Activated T-helper 2 cell treated with anti-CD3 and anti-CD28 coated beads, Interferon-gamma antibody, Interleukin-2, Interleukin-4, amounts not matched to agents 10 μg/mL and 5 μg/mL and 100 μg/mL, durations not matched to agents 14 hours and 24 hours and 36 hours (primary cell): ENCODE measurements at regions of chr6 and their contacts with region 1.

Region 1: GRCh38 chr6:90285611-90286381 is 10.8 kb downstream of the BACH2 start:
- DNase-seq: peak; percentile 51
- H3K4me3 Mint-ChIP-seq: peak overlapping the region; percentile 71
- H3K27ac Mint-ChIP-seq: peak overlapping the region; percentile 90
- H3K4me1 Mint-ChIP-seq: peaks cover 83% of the 10 kb centered on the region
- H3K27me3 Mint-ChIP-seq: no peaks in the 10 kb centered on the region

Region 2: GRCh38 chr6:89952686-89953085 is 333.1 kb before region 1 on chr6:
- intact Hi-C with region 1: loop called (anchors 1 kb)
- DNase-seq: peak; percentile 53
- H3K4me3 Mint-ChIP-seq: peak overlapping the region; percentile 49
- H3K27ac Mint-ChIP-seq: peak overlapping the region; percentile 76
- H3K4me1 Mint-ChIP-seq: peaks cover 67% of the 10 kb centered on the region
- H3K27me3 Mint-ChIP-seq: no peaks in the 10 kb centered on the region

Region 3: GRCh38 chr6:90219209-90219985 is 66.4 kb before region 1 on chr6:
- intact Hi-C with region 1: loop called (anchors 2 kb)
- DNase-seq: no peak
- H3K4me3 Mint-ChIP-seq: no peak overlapping the region
- H3K27ac Mint-ChIP-seq: no peak overlapping the region
- H3K4me1 Mint-ChIP-seq: peaks cover 25% of the 10 kb centered on the region
- H3K27me3 Mint-ChIP-seq: no peaks in the 10 kb centered on the region

Region 4: GRCh38 chr6:90268178-90268577 is 17.6 kb before region 1 on chr6:
- intact Hi-C with region 1: loop called (anchors 2 kb)
- DNase-seq: no peak
- H3K4me3 Mint-ChIP-seq: peak overlapping the region; percentile 43
- H3K27ac Mint-ChIP-seq: peak overlapping the region; percentile 73
- H3K4me1 Mint-ChIP-seq: peaks cover 84% of the 10 kb centered on the region
- H3K27me3 Mint-ChIP-seq: no peaks in the 10 kb centered on the region

Region 5: GRCh38 chr6:90350689-90351554 is 65.1 kb after region 1 on chr6:
- intact Hi-C with region 1: loop called (anchors 1 kb)
- DNase-seq: peak; percentile 35
- H3K4me3 Mint-ChIP-seq: no peak overlapping the region
- H3K27ac Mint-ChIP-seq: peak overlapping the region; percentile 89
- H3K4me1 Mint-ChIP-seq: peaks cover 47% of the 10 kb centered on the region
- H3K27me3 Mint-ChIP-seq: no peaks in the 10 kb centered on the region

Region 6: GRCh38 chr6:90458353-90459224 is 172.8 kb after region 1 on chr6:
- intact Hi-C with region 1: loop called (anchors 1 kb)
- DNase-seq: peak; percentile 68
- H3K4me3 Mint-ChIP-seq: peak overlapping the region; percentile 27
- H3K27ac Mint-ChIP-seq: peak overlapping the region; percentile 95
- H3K4me1 Mint-ChIP-seq: peaks cover 76% of the 10 kb centered on the region
- H3K27me3 Mint-ChIP-seq: no peaks in the 10 kb centered on the region

Region 7: GRCh38 chr6:90586836-90587638 is 301.2 kb after region 1 on chr6 and contains the start of gene MAP3K7:
- intact Hi-C with region 1: loop called (anchors 5 kb)
- DNase-seq: peak; percentile 93
- H3K4me3 Mint-ChIP-seq: peak within 1 kb of the TSS; percentile 94
- H3K27ac Mint-ChIP-seq: peak within 1 kb of the TSS; percentile 95
- H3K4me1 Mint-ChIP-seq: peaks cover 42% of the 10 kb centered on the region
- H3K27me3 Mint-ChIP-seq: peaks cover 20% of the 10 kb centered on the region
- total RNA-seq, gene MAP3K7: 30.5 and 32.1 TPM in 2 replicates

Region 8: GRCh38 chr6:90960324-90960723 is 674.5 kb after region 1 on chr6:
- intact Hi-C with region 1: no loop called
- DNase-seq: no peak
- H3K4me3 Mint-ChIP-seq: no peak overlapping the region
- H3K27ac Mint-ChIP-seq: no peak overlapping the region
- H3K4me1 Mint-ChIP-seq: no peaks in the 10 kb centered on the region
- H3K27me3 Mint-ChIP-seq: no peaks in the 10 kb centered on the region